Activated B cell treated with CpG ODN at 0.5 μM for 24 hours (primary cell): ENCODE measurements at regions of chr13 and their contacts with region 1.

Region 1: DNA sequence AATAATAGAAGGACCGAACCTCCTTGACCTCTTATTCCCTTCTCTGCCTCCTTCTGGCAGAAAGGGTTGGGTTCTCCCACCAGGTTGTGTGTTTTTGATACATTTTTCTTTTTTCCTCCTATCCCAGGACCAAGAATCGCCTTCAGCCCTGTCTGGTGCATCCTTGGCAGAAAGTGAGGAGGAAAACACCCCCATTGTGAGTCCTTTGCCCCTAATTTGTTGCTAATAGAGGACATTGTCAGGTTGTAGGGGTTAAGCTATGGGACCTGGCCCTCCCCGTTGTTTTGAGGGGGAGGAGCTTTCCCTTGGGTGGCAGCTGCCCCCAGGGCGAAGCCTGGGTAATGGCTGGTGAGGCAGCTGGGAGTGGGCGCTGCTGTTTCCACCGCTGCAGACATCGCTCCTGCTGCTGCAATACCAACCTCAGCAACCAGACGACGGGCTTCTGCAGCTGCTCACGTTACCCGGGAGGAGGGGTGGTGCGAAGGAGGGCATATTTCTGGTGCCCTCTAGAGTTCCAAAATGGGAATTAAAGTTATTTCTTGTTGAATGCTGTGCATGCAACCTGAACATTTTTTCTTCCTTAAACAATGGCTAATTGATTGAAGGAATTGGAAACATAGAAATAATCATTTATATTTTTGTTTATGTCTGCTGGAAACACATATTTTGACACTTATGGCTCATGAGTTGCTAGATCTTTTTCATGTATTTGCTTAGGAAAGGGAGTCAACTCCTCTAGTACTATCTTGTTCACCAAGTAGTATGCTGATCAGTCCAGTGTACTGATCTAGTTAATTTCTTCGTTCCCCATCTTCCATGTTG is 1.5 kb downstream of the ZMYM2 start:
- DNase-seq: peak; percentile 60
- ATAC-seq: peak; percentile 43
- H3K4me3 Mint-ChIP-seq: peak overlapping the region; percentile 98
- H3K27ac Mint-ChIP-seq: peak overlapping the region; percentile 98
- H3K4me1 Mint-ChIP-seq: peaks cover 33% of the 10 kb centered on the region
- H3K27me3 Mint-ChIP-seq: no peaks in the 10 kb centered on the region
- CTCF ChIP-seq: no peak

Region 2: DNA sequence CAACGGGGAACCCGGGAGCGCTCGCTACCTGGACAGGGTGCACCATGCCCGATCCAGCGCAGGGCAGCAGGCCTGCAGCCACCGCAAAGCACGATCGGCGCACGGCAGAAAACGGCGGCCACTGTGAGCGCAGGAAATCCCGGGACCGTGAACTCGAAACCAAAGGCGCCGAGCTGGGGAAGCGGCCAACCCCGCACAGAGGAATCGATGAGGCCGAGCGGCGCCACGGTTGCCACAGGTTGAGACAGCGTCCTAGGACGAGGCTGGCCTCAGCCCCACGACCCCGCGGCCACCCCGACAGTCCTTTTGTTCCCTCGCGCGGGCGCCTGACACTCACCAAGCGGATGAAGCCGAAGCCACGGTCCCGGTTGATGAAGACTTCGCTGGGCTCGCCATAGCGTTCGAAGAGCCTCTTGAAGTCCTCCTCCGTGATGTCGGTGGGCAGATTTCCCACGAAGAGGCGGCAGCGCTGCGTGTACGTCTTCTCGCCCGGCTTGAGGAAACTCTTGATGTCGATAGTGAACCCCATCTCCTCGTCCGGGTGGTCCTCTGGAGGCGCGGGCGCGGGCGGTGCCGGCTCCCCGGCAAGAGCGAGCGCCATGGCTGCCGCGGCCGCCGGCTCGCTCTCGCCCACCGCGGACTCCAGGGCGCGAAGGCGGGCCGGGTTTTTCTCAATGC is 177.9 kb before region 1 on chr13:
- CTCF ChIA-PET with region 1: interaction called, 3 read pairs
- POLR2A ChIA-PET with region 1: interaction called, 3 read pairs
- intact Hi-C with region 1: loop called (anchors 1 kb)
- DNase-seq: peak; percentile 57
- ATAC-seq: peak; percentile 61
- H3K4me3 Mint-ChIP-seq: peak overlapping the region; percentile 97
- H3K27ac Mint-ChIP-seq: peak overlapping the region; percentile 98
- H3K4me1 Mint-ChIP-seq: peaks cover 15% of the 10 kb centered on the region
- H3K27me3 Mint-ChIP-seq: no peaks in the 10 kb centered on the region
- CTCF ChIP-seq: no peak

Region 3: DNA sequence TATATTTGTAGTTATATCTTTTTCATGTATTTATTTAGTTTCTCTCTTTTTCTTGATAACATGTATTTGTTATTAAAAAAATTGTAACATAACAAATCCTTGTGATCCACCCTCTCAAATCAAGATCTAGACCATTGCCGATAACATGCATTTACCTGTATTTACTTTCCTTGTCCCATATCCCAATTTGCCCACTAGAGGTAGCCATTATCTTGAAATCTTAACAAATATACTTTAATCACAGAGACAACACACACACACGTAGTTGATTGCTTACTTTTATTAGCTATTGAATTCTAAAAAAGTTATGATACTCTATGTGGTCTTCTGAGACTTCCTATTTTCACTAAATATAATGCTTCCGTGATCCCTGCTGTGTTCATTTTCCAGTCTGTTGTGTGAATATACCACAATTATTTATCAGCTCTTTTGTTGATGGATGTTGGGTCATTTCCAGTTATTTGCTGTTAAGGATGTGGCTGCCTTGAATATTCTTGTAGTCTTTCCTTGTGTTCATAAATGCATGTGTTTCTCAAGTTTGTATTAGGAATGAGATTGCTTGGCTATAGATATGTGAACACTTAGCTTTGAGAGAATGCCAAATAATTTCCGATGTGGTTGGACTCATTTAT is 32.8 kb before region 1 on chr13:
- CTCF ChIA-PET with region 1: interaction called, 6 read pairs
- POLR2A ChIA-PET with region 1: no interaction called
- intact Hi-C with region 1: loop called (anchors 1 kb)
- DNase-seq: no peak
- ATAC-seq: no peak
- H3K4me3 Mint-ChIP-seq: no peak overlapping the region
- H3K27ac Mint-ChIP-seq: no peak overlapping the region
- H3K4me1 Mint-ChIP-seq: no peaks in the 10 kb centered on the region
- H3K27me3 Mint-ChIP-seq: peaks cover 2% of the 10 kb centered on the region
- CTCF ChIP-seq: no peak

Region 4: GRCh38 chr13:20024702-20025101 is 64.7 kb after region 1 on chr13:
- CTCF ChIA-PET with region 1: no interaction called
- POLR2A ChIA-PET with region 1: no interaction called
- intact Hi-C with region 1: loop called (anchors 5 kb)
- DNase-seq: no peak
- ATAC-seq: no peak
- H3K4me3 Mint-ChIP-seq: no peak overlapping the region
- H3K27ac Mint-ChIP-seq: peak overlapping the region; percentile 24
- H3K4me1 Mint-ChIP-seq: peaks cover 16% of the 10 kb centered on the region
- H3K27me3 Mint-ChIP-seq: no peaks in the 10 kb centered on the region
- CTCF ChIP-seq: no peak

Region 5: DNA sequence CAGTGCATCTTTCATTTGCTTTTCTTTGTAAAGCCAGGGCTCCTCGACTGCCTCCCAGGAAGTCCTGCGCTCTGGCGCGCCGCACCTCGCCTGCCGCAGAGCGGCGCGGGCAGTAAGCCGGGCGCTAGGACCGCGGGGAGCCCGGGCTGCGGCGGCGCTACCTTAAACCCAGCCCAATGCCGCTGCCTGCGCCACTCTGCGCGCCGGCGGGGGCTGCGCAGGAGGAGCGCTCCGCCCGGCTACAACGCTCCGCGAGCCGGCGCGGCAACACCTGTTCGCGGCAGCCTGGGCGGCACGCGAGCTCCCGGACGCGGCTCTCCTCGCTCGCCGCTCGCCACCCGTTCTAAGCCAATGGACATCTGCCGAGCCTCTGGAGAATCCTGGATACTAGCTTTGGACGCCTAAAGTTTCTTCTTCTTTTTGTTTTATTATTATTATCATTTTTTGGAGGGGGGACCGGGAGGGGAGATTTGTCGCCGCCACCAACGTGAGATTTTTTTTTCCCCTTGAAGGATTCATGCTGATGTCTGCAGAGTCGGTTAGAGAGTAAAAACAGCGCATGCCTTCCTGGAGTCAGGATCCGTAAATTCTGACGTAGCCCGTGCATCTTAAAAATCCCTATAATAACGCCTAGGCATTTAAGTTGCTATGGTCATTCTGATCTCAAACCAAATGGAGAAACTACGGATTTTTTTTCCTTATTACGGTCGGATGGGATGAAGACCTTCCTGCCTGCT is 1711.0 kb after region 1 on chr13 and contains the start of gene FGF9:
- CTCF ChIA-PET with region 1: no interaction called
- POLR2A ChIA-PET with region 1: no interaction called
- intact Hi-C with region 1: loop called (anchors 10 kb)
- DNase-seq: peak; percentile 76
- ATAC-seq: peak; percentile 77
- H3K4me3 Mint-ChIP-seq: peak within 1 kb of the TSS; percentile 85
- H3K27ac Mint-ChIP-seq: peak within 1 kb of the TSS; percentile 61
- H3K4me1 Mint-ChIP-seq: peaks cover 48% of the 10 kb centered on the region
- H3K27me3 Mint-ChIP-seq: peaks cover 43% of the 10 kb centered on the region
- CTCF ChIP-seq: no peak
- total RNA-seq, gene FGF9: 0.22 and 0.49 TPM in 2 replicates